PC-9 (cell line): ENCODE measurements at regions of chr18 and their contacts with region 1.

Region 1: GRCh38 chr18:21203096-21203495 is 38.9 kb upstream of the GREB1L start:
- DNase-seq: no peak
- H3K4me3 ChIP-seq: no peak overlapping the region
- H3K27ac ChIP-seq: no peak overlapping the region
- H3K4me1 ChIP-seq: no peaks in the 10 kb centered on the region
- H3K27me3 ChIP-seq: no peaks in the 10 kb centered on the region
- CTCF ChIP-seq: no peak

Region 2: DNA sequence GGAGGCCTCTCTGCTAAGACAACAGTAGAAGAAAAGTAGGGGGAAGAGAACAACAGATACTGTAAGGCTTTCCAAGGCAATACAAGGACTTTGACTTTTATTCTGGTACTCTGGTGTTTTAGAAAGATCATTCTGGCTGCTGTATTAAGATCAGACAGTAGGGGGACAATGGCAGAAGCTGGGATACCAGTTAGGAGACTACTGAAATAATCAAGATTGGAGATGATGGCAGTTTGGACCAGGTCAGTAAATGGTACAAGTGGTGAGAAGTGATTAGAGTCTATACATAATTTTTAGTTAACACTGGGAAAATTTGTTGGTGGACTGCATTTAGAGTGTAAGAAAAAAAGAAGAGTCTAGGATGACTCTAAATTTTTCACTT is 231.2 kb before region 1 on chr18:
- CTCF ChIA-PET with region 1: no interaction called
- POLR2A ChIA-PET with region 1: no interaction called
- intact Hi-C with region 1: no loop called
- DNase-seq: no peak
- H3K4me3 ChIP-seq: no peak overlapping the region
- H3K27ac ChIP-seq: no peak overlapping the region
- H3K4me1 ChIP-seq: no peaks in the 10 kb centered on the region
- H3K27me3 ChIP-seq: no peaks in the 10 kb centered on the region
- CTCF ChIP-seq: peak; percentile 60

Region 3: DNA sequence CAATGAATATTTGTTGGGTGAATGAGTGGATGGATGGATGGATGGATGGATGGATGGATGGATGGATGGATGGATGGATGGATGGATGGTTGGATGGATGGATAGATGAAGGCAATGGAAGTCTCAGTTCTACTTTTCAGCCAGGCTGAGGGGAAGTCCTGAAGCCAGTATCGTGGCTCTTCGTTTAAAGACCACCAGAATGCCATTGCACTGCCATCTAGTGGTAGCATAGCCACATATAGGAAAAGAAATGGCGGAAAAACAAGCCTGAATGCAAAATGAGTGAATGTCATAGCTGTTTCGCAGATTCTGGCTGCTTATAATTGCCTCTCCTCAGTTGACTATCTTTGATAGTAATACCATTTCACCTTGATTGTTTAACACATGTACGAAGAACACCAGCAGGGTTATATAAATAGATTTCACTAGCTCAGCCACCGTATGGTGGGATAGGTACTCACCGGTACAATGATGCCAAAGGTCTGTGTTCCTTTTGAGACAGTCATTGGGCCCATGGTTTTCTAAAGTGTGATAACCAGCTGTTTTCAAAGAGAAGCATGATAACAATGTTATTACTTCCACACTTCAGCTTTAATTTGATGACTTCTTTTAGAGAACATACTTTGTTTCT is 23.4 kb before region 1 on chr18:
- CTCF ChIA-PET with region 1: interaction called, 13 read pairs
- POLR2A ChIA-PET with region 1: no interaction called
- intact Hi-C with region 1: no loop called
- DNase-seq: peak in 1 of 2 experiments; percentile 7
- H3K4me3 ChIP-seq: no peak overlapping the region
- H3K27ac ChIP-seq: no peak overlapping the region
- H3K4me1 ChIP-seq: peaks cover 16% of the 10 kb centered on the region
- H3K27me3 ChIP-seq: no peaks in the 10 kb centered on the region
- CTCF ChIP-seq: peak; percentile 74